CD4-positive, alpha-beta memory T cell (primary cell): ENCODE measurements at regions of chr2 and their contacts with region 1.

Region 1: DNA sequence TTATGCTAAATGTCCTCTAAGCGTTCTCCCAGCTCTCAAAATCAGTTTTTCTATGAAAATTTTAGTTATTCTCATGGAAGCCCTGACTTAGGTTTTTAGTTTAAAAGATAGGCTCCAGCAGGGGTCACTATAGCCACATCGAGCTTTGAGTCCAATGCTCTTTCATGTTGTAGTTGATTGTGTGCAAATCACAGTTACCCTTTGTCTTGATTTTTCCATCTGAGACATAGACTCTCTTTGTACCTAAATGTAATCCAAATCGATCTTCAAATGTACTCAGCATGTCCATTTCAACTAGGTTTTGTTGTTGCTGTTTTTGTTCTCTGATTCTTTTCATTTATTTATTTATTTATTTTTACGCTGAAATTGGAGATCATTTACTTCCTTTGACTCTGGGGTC is 26.4 kb upstream of the MSTN start:
- DNase-seq: peak in 4 of 5 donors; percentile 42 to 53 (median 46)
- H3K4me3 ChIP-seq: no peak overlapping the region
- H3K4me3 Mint-ChIP-seq: no peak overlapping the region
- H3K27ac ChIP-seq: no peak overlapping the region
- H3K27ac Mint-ChIP-seq: no peak overlapping the region
- H3K4me1 ChIP-seq: no peaks in the 10 kb centered on the region
- H3K4me1 Mint-ChIP-seq: no peaks in the 10 kb centered on the region
- H3K27me3 ChIP-seq: no peaks in the 10 kb centered on the region
- H3K27me3 Mint-ChIP-seq: no peaks in the 10 kb centered on the region

Region 2: GRCh38 chr2:190277234-190278112 is 188.6 kb after region 1 on chr2:
- CTCF ChIA-PET with region 1: interaction called, 4 read pairs
- POLR2A ChIA-PET with region 1: no interaction called
- intact Hi-C with region 1: loop called (anchors 1 kb)
- DNase-seq: peak in 3 of 5 donors; percentile 2 to 9 (median 6)
- H3K4me3 ChIP-seq: no peak overlapping the region
- H3K4me3 Mint-ChIP-seq: no peak overlapping the region
- H3K27ac ChIP-seq: no peak overlapping the region
- H3K27ac Mint-ChIP-seq: no peak overlapping the region
- H3K4me1 ChIP-seq: no peaks in the 10 kb centered on the region
- H3K4me1 Mint-ChIP-seq: peaks cover 0 to 3% (median 0%) of the 10 kb centered on the region in 4 donors
- H3K27me3 ChIP-seq: no peaks in the 10 kb centered on the region
- H3K27me3 Mint-ChIP-seq: no peaks in the 10 kb centered on the region

Region 3: DNA sequence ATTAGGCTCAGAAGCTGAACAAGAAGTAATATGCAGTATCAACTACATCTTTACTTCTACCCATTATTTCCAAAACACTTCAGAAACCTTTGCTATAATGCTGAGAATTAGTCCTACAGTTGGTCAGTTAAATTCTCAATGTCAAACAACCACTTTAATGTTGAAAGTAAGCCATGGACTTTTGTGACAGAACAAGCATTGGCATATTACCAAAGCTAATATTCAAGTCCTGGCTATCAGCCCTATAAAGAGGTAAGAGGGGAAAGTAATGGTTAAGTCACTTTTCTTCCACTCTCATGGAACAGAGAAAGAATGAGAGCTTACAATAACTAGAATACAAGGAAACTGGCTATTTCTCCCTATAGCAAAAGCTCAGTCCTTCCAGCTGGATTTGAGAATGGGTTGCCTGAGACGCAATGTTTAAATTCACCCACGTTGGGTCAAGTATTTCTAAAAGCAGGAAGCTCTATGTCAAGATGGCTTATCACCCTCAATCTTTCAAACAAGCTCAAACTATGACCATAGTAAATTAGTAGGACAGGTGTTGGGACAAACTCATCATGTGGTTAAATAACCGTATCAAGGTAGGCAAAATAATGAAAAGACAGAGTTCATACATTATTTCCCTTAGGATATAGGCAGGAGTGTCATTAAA is 287.8 kb after region 1 on chr2:
- CTCF ChIA-PET with region 1: no interaction called
- POLR2A ChIA-PET with region 1: no interaction called
- intact Hi-C with region 1: loop called (anchors 1 kb)
- DNase-seq: no peak
- H3K4me3 ChIP-seq: no peak overlapping the region
- H3K4me3 Mint-ChIP-seq: no peak overlapping the region
- H3K27ac ChIP-seq: no peak overlapping the region
- H3K27ac Mint-ChIP-seq: no peak overlapping the region
- H3K4me1 ChIP-seq: no peaks in the 10 kb centered on the region
- H3K4me1 Mint-ChIP-seq: peaks cover 0 to 2% (median 0%) of the 10 kb centered on the region in 4 donors
- H3K27me3 ChIP-seq: no peaks in the 10 kb centered on the region
- H3K27me3 Mint-ChIP-seq: no peaks in the 10 kb centered on the region

Region 4: DNA sequence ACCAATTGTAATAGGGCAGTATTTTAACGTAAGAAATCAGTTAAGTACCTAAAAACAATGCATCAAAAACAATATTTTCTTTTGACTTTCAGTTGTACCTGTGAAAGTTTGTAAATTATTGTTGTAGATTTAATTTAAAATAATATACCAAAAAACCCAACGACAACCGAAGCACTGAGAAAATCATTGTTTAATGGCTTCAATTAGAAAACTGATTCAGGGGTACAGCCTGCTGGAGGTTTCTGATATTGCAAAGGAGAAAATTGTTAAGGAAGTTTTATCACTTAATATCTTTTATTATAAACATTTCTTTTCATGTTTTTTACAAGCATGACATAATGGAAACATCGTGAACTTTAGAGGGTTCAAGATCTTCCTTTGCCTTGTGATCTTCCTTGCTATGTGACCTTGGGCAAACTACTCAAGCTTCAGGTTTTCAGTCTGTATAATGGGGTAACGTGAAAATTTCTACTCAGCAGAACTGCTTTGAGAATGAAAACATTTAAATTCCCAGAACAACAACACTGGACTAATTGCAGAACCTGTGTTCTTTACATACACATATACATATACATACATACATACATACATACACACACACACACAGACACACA is 715.4 kb after region 1 on chr2:
- CTCF ChIA-PET with region 1: interaction called, 4 read pairs
- POLR2A ChIA-PET with region 1: no interaction called
- intact Hi-C with region 1: loop called (anchors 2 kb)
- DNase-seq: peak in 3 of 5 donors; percentile 4 to 23 (median 17)
- H3K4me3 ChIP-seq: no peak overlapping the region
- H3K4me3 Mint-ChIP-seq: no peak overlapping the region
- H3K27ac ChIP-seq: no peak overlapping the region
- H3K27ac Mint-ChIP-seq: no peak overlapping the region
- H3K4me1 ChIP-seq: no peaks in the 10 kb centered on the region
- H3K4me1 Mint-ChIP-seq: no peaks in the 10 kb centered on the region
- H3K27me3 ChIP-seq: no peaks in the 10 kb centered on the region
- H3K27me3 Mint-ChIP-seq: no peaks in the 10 kb centered on the region

Region 5: GRCh38 chr2:190961918-190962487 is 873.1 kb after region 1 on chr2:
- CTCF ChIA-PET with region 1: no interaction called
- POLR2A ChIA-PET with region 1: no interaction called
- intact Hi-C with region 1: loop called (anchors 10 kb)
- DNase-seq: no peak
- H3K4me3 ChIP-seq: no peak overlapping the region
- H3K4me3 Mint-ChIP-seq: no peak overlapping the region
- H3K27ac ChIP-seq: no peak overlapping the region
- H3K27ac Mint-ChIP-seq: peak overlapping the region in 5 of 7 donors; percentile 7 to 87 (median 42)
- H3K4me1 ChIP-seq: no peaks in the 10 kb centered on the region
- H3K4me1 Mint-ChIP-seq: peaks cover 24 to 44% (median 34%) of the 10 kb centered on the region in 4 donors
- H3K27me3 ChIP-seq: no peaks in the 10 kb centered on the region
- H3K27me3 Mint-ChIP-seq: no peaks in the 10 kb centered on the region